ENCODE measurements at regions of chr21 and their contacts with region 1.

Region 1: GRCh38 chr21:46551636-46552241 is 53.1 kb downstream of the S100B start:
- DNase-seq: peak; percentile 16 to 40 (median 30)
- ATAC-seq: peak; percentile 49
- H3K4me3 ChIP-seq: peak overlapping the region; percentile 22
- H3K4me3 Mint-ChIP-seq: peak overlapping the region; percentile 60 to 94 (median 78)
- H3K27ac ChIP-seq: peak overlapping the region; percentile 83
- H3K27ac Mint-ChIP-seq: peak overlapping the region; percentile 84 to 100 (median 99)
- H3K4me1 ChIP-seq: peaks cover 48 to 77% of the 10 kb centered on the region in 2 donors
- H3K4me1 Mint-ChIP-seq: peaks cover 40 to 95% (median 80%) of the 10 kb centered on the region in 7 donors
- H3K27me3 ChIP-seq: no peaks in the 10 kb centered on the region
- H3K27me3 Mint-ChIP-seq: no peaks in the 10 kb centered on the region

Region 2: GRCh38 chr21:46323227-46324128 is 228.3 kb before region 1 on chr21 and contains the start of gene C21orf58:
- CTCF ChIA-PET with region 1: no interaction called
- POLR2A ChIA-PET with region 1: no interaction called
- intact Hi-C with region 1: loop called in 1 of 2 experiments (anchors 2 kb)
- DNase-seq: peak; percentile 96 to 99 (median 98)
- ATAC-seq: peak; percentile 90
- H3K4me3 ChIP-seq: peak within 1 kb of the TSS; percentile 98
- H3K4me3 Mint-ChIP-seq: peak within 1 kb of the TSS; percentile 90 to 98 (median 96)
- H3K27ac ChIP-seq: peak within 1 kb of the TSS; percentile 97
- H3K27ac Mint-ChIP-seq: peak within 1 kb of the TSS; percentile 91 to 99 (median 97)
- H3K4me1 ChIP-seq: peaks cover 0 to 16% of the 10 kb centered on the region in 2 donors
- H3K4me1 Mint-ChIP-seq: peaks cover 14 to 44% (median 33%) of the 10 kb centered on the region in 7 donors
- H3K27me3 ChIP-seq: no peaks in the 10 kb centered on the region
- H3K27me3 Mint-ChIP-seq: no peaks in the 10 kb centered on the region
- total RNA-seq, gene C21orf58: 5.0 to 38.4 (median 9.0) TPM

Region 3: DNA sequence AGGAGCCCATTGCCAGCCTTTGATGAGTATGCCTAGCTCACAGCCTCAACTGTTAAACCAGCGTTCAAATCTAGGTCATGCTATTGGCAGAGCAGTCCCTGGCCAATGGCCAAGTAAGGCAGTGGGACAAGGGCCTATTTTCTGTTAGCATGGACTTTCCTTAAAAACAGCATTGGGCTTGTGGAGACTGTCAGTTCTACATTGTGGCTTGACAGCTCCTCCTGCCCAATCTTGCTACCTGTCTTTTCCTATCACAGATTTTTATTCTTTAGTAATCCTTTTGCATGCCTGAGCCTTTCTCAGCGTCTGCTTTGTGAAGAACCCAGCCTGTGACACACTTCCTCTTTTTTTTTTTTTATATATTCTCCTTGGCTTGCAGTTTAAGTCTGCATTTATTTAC is 36.6 kb before region 1 on chr21:
- CTCF ChIA-PET with region 1: no interaction called
- POLR2A ChIA-PET with region 1: interaction called, 3 read pairs
- intact Hi-C with region 1: loop called in 1 of 2 experiments (anchors 5 kb)
- DNase-seq: peak in 6 of 9 donors; percentile 9 to 50 (median 18)
- ATAC-seq: peak; percentile 20
- H3K4me3 ChIP-seq: no peak overlapping the region
- H3K4me3 Mint-ChIP-seq: peak overlapping the region in 6 of 10 donors; percentile 5 to 58 (median 23)
- H3K27ac ChIP-seq: peak overlapping the region; percentile 39
- H3K27ac Mint-ChIP-seq: peak overlapping the region in 8 of 9 donors; percentile 65 to 83 (median 77)
- H3K4me1 ChIP-seq: peaks cover 7 to 15% of the 10 kb centered on the region in 2 donors
- H3K4me1 Mint-ChIP-seq: peaks cover 6 to 49% (median 31%) of the 10 kb centered on the region in 7 donors
- H3K27me3 ChIP-seq: no peaks in the 10 kb centered on the region
- H3K27me3 Mint-ChIP-seq: no peaks in the 10 kb centered on the region

Region 4: GRCh38 chr21:46540087-46540710 is 11.5 kb before region 1 on chr21:
- CTCF ChIA-PET with region 1: interaction called, 3 read pairs
- POLR2A ChIA-PET with region 1: interaction called, 16 read pairs
- intact Hi-C with region 1: no loop called
- DNase-seq: peak in 2 of 9 donors; percentile 18 to 21
- ATAC-seq: peak; percentile 65
- H3K4me3 ChIP-seq: no peak overlapping the region
- H3K4me3 Mint-ChIP-seq: peak overlapping the region in 7 of 10 donors; percentile 37 to 82 (median 64)
- H3K27ac ChIP-seq: peak overlapping the region; percentile 49
- H3K27ac Mint-ChIP-seq: peak overlapping the region in 8 of 9 donors; percentile 40 to 92 (median 80)
- H3K4me1 ChIP-seq: peaks cover 14 to 56% of the 10 kb centered on the region in 2 donors
- H3K4me1 Mint-ChIP-seq: peaks cover 29 to 86% (median 73%) of the 10 kb centered on the region in 7 donors
- H3K27me3 ChIP-seq: no peaks in the 10 kb centered on the region
- H3K27me3 Mint-ChIP-seq: no peaks in the 10 kb centered on the region

Region 5: GRCh38 chr21:46622226-46622625 is 70.5 kb after region 1 on chr21:
- CTCF ChIA-PET with region 1: interaction called, 3 read pairs
- POLR2A ChIA-PET with region 1: interaction called, 49 read pairs
- intact Hi-C with region 1: no loop called
- DNase-seq: peak in 7 of 9 donors; percentile 50 to 86 (median 74)
- ATAC-seq: peak; percentile 87
- H3K4me3 ChIP-seq: peak overlapping the region; percentile 14
- H3K4me3 Mint-ChIP-seq: peak overlapping the region; percentile 62 to 82 (median 76)
- H3K27ac ChIP-seq: peak overlapping the region; percentile 80
- H3K27ac Mint-ChIP-seq: peak overlapping the region; percentile 93 to 98 (median 97)
- H3K4me1 ChIP-seq: peaks cover 35 to 67% of the 10 kb centered on the region in 2 donors
- H3K4me1 Mint-ChIP-seq: peaks cover 45 to 84% (median 73%) of the 10 kb centered on the region in 7 donors
- H3K27me3 ChIP-seq: no peaks in the 10 kb centered on the region
- H3K27me3 Mint-ChIP-seq: peaks cover 0 to 2% (median 0%) of the 10 kb centered on the region in 5 donors